Cardiac septum (tissue), 1 donor: ENCODE measurements at regions of chr11 and their contacts with region 1.

Region 1: DNA sequence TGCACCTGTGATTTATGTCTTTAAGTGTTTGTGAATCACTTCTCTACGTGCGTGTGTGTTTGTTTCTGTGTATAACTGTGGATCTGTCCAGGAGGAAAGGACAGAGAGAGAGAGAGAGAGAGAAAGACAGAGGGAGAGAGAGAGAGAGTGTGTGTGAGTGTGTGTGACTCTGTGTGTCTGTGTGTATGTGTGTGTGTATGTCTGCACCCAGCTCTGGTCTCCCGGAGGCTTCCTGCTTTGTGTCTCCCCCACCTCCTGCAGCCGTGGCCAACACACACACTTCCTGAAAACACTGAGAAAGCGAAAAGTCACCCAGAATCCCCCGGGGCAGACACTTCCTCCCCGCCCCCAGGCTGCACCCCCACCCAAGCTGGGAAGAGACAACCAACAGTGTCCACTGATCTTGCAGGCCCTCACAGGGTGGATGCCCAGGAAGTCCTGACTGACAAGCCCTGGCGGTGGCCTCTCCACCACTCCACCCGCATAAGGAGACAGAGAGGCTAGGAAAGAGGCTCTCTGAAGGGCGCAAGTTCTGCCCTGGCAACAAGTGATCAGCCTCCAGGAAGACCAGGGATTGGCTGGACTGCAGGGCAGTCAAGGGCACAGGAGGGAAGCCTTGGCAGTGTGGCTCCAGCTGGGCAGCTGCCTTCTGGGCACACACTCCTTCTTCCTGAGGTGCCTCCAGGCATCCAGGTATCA is 30.0 kb downstream of the ARAP1 start:
- DNase-seq: peak; percentile 95

Region 2: GRCh38 chr11:72758690-72759389 is 36.6 kb after region 1 on chr11:
- intact Hi-C with region 1: no loop called
- DNase-seq: no peak

Region 3: DNA sequence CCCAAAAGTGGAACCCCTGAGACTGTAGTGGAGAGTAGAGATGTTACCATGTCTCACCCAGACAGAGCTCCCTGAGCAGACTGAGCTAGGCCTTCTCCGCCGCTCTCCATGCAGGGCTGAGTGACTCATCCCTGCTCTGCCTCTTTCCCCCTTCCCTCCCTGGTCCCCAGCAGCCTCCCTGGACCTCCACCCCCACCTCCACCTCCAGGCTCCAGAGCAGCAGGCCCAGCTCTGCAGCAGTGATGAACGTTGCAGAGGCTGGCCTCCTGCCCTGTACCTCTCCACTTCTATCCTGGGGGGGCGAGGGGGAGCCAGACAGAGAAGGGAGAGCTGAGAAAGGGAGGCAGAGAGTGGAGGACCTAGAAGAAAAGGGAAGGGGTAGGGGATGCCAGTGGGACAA is 49.3 kb after region 1 on chr11:
- intact Hi-C with region 1: no loop called
- DNase-seq: no peak

Region 4: GRCh38 chr11:72793425-72794367 is 71.5 kb after region 1 on chr11 and contains the start of gene STARD10:
- intact Hi-C with region 1: loop called (anchors 1 kb)
- DNase-seq: peak; percentile 97
- total RNA-seq, gene STARD10: 45.2 TPM

Region 5: GRCh38 chr11:72840780-72841179 is 118.6 kb after region 1 on chr11:
- intact Hi-C with region 1: no loop called
- DNase-seq: no peak